ENCODE measurements at regions of chr4 and their contacts with region 1.

Region 1: DNA sequence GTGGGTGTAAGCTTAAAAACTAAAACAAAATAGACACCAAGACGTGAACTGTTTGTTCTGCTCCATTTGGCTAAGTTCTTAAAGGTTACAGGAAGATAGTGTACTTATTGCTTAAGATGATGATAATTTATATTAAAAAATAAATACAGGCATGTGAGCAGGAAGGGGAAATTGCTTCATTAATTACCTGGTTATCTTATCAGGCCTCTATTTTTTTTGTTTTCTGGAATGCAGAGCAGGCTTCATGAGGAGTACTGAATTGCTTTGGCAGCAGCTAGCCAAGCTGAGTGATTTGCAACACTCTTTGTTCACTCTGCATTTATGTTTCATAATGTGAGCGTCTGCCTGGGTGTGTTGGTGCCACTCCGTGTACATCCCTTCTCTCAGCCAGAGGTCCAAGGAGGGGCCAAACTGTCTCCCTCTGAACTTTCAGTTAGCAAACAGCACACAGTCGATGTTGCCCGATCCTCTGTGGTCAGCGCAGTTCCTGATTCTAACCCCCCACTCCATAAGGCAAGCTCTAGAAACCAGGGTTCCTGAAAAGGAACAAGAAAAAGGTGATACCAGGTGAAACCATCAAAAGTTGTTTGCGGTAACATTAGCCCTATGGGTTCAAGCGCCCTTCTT is 348.2 kb downstream of the SPRY1 start:
- DNase-seq: peak in 3 of 5 donors; percentile 20 to 42 (median 30)
- ATAC-seq: peak; percentile 47 to 87 (median 61)
- H3K4me3 ChIP-seq: no peak overlapping the region
- H3K27ac ChIP-seq: peak overlapping the region; percentile 4 to 66 (median 47)
- H3K4me1 ChIP-seq: peaks cover 0 to 53% (median 17%) of the 10 kb centered on the region in 12 donors
- H3K27me3 ChIP-seq: no peaks in the 10 kb centered on the region
- CTCF ChIP-seq: no peak
- POLR2A ChIP-seq: no peak

Region 2: GRCh38 chr4:123555233-123555806 is 189.5 kb before region 1 on chr4:
- intact Hi-C with region 1: loop called in 1 of 10 experiments (anchors 2 kb)
- DNase-seq: peak; percentile 74 to 89 (median 85)
- ATAC-seq: peak; percentile 79 to 95 (median 92)
- H3K4me3 ChIP-seq: peak overlapping the region in 3 of 12 donors; percentile 1 to 27 (median 5)
- H3K27ac ChIP-seq: peak overlapping the region; percentile 49 to 83 (median 70)
- H3K4me1 ChIP-seq: peaks cover 0 to 37% (median 17%) of the 10 kb centered on the region in 12 donors
- H3K27me3 ChIP-seq: no peaks in the 10 kb centered on the region
- CTCF ChIP-seq: no peak
- POLR2A ChIP-seq: no peak

Region 3: GRCh38 chr4:123856689-123857545 is 112.1 kb after region 1 on chr4:
- intact Hi-C with region 1: loop called in 1 of 10 experiments (anchors 10 kb)
- DNase-seq: peak in 4 of 5 donors; percentile 56 to 72 (median 59)
- ATAC-seq: peak; percentile 83 to 94 (median 90)
- H3K4me3 ChIP-seq: peak overlapping the region in 6 of 12 donors; percentile 0 to 25 (median 18)
- H3K27ac ChIP-seq: peak overlapping the region; percentile 19 to 83 (median 72)
- H3K4me1 ChIP-seq: peaks cover 0 to 41% (median 29%) of the 10 kb centered on the region in 12 donors
- H3K27me3 ChIP-seq: no peaks in the 10 kb centered on the region
- CTCF ChIP-seq: peak in 7 of 12 donors; percentile 7 to 37 (median 22)
- POLR2A ChIP-seq: no peak

Region 4: GRCh38 chr4:123986268-123986798 is 241.6 kb after region 1 on chr4:
- intact Hi-C with region 1: loop called in 1 of 10 experiments (anchors 5 kb)
- DNase-seq: peak in 4 of 5 donors; percentile 67 to 81 (median 74)
- ATAC-seq: peak; percentile 61 to 92 (median 87)
- H3K4me3 ChIP-seq: no peak overlapping the region
- H3K27ac ChIP-seq: peak overlapping the region; percentile 31 to 86 (median 68)
- H3K4me1 ChIP-seq: peaks cover 0 to 30% (median 14%) of the 10 kb centered on the region in 12 donors
- H3K27me3 ChIP-seq: no peaks in the 10 kb centered on the region
- CTCF ChIP-seq: no peak
- POLR2A ChIP-seq: no peak

Region 5: DNA sequence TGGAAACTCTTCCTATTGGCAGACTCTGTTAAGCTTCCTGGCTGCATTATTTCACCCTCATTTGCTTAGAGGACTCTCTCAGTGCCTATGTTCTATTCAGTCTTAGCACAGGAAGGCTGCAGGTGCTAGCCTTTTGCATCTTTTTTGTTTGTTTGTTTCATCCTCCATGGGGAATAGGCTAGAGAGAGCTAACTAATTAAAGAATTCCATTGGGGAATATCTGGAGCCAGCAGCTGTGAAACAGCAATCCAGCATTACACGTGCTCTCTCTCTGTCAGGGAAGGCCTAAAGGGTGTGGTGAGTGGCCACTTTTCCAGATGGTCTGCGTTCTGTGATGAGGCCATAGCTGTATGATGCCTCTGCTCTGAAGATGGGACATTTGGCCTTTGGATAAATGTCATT is 285.4 kb after region 1 on chr4:
- intact Hi-C with region 1: loop called in 1 of 10 experiments (anchors 10 kb)
- DNase-seq: peak in 4 of 5 donors; percentile 47 to 71 (median 51)
- ATAC-seq: peak; percentile 89 to 95 (median 94)
- H3K4me3 ChIP-seq: no peak overlapping the region
- H3K27ac ChIP-seq: peak overlapping the region; percentile 4 to 72 (median 28)
- H3K4me1 ChIP-seq: peaks cover 0 to 35% (median 12%) of the 10 kb centered on the region in 12 donors
- H3K27me3 ChIP-seq: no peaks in the 10 kb centered on the region
- CTCF ChIP-seq: no peak
- POLR2A ChIP-seq: no peak

Region 6: GRCh38 chr4:124060261-124060918 is 315.6 kb after region 1 on chr4:
- intact Hi-C with region 1: loop called in 2 of 10 experiments (anchors 5 to 10 kb)
- DNase-seq: peak in 4 of 5 donors; percentile 51 to 68 (median 58)
- ATAC-seq: peak; percentile 91 to 97 (median 94)
- H3K4me3 ChIP-seq: no peak overlapping the region
- H3K27ac ChIP-seq: peak overlapping the region; percentile 51 to 85 (median 80)
- H3K4me1 ChIP-seq: peaks cover 0 to 34% (median 23%) of the 10 kb centered on the region in 12 donors
- H3K27me3 ChIP-seq: no peaks in the 10 kb centered on the region
- CTCF ChIP-seq: peak in 1 of 12 donors; percentile 3
- POLR2A ChIP-seq: no peak

Measured in heart left ventricle (tissue), 16 donors.